ENCODE measurements at regions of chr10 and their contacts with region 1.

Region 1: DNA sequence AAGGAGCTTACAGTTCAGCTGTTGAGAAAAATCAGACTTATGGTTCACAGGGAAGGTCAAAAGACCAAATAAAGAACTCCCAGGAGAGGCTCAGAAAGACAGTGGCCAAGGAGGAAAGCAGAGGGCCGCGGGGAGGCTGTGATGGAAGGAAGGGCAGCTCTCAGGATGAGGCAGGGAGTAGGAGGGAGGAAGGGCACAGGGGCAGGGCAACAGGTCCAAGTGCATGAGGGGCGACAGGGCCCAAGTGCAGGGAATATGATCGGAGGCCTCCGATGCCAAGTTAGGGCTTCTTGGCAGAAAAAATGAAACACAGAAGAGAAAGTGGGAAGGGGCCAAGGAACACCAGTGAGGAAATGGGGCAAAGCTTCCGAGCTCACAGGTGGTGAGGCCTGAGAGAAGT is 13.4 kb upstream of the PNLIPRP2 start:
- H3K4me3 ChIP-seq: no peak overlapping the region
- H3K27ac ChIP-seq: no peak overlapping the region
- H3K4me1 ChIP-seq: no peaks in the 10 kb centered on the region
- CTCF ChIP-seq: no peak

Region 2: GRCh38 chr10:116659049-116659670 is 51.8 kb after region 1 on chr10:
- CTCF ChIA-PET with region 1: interaction called, 10 read pairs
- POLR2A ChIA-PET with region 1: interaction called, 4 read pairs
- H3K4me3 ChIP-seq: no peak overlapping the region
- H3K27ac ChIP-seq: no peak overlapping the region
- H3K4me1 ChIP-seq: 0 out of 2 replicates have a peak, but pooled peaks cover 3% of the 10 kb centered on the region
- CTCF ChIP-seq: no peak